ENCODE measurements at regions of chr7 and their contacts with region 1.

Region 1: DNA sequence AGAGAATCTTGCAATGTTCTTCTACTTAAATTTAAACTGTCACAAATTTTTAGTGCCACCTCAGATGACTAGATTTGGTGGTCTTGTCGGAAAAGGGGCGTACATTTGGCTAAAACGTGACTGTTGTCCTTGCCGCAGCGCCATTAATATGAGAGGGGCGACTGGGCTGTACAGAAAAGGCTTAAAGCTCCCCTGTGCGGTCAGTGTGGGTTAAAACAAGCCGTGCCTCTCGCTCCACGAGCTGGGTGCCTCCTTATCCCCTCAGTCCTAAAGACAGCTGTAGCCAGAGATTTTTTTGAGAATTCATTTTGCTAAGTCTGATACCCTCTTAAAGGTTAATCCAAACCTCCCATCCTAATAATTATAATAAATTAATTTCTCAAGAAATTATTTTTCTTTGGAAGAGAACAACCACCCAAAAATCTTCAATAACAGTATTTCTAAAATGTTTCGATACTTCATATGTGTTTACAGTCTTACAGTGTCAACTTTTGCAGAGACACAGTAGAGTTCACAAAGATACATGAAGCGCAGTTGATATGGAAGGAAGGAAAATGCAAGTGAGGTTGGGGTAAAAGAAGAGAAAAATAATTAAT is 68.6 kb downstream of the C7orf25 start:
- DNase-seq: peak; percentile 25 to 57 (median 40)
- ATAC-seq: peak; percentile 61 to 83
- H3K4me3 ChIP-seq: no peak overlapping the region
- H3K27ac ChIP-seq: no peak overlapping the region
- H3K4me1 ChIP-seq: no peaks in the 10 kb centered on the region
- H3K27me3 ChIP-seq: no peaks in the 10 kb centered on the region

Region 2: DNA sequence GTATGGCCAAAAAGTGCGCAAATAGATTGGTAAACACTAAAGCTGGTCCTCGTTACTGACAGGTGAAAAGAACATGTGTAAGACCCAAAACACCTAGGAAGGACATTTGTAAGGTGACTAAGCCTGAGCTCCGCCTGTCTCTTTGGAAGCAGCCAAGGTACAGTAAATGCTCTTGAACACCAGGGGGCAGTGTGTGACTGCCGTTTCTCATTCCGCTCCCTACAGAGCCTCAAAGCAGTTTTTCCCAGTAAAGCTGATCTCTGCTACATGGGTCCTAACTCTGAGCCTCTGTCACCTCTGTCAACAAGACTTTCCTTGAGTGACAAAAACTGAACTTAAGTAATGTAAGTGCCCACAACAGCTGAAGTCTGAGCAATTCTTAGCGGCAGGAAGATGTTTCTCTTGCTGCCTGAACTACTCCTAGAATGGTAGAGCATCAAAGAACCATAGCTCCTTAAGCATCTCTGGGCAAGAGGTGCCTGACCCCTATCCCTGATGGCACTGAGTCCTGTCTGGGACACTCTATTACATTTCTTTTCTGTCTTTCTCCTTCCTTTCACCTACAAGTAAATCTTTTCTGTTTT is 902.5 kb before region 1 on chr7:
- intact Hi-C with region 1: loop called in 1 of 4 experiments (anchors 10 kb)
- DNase-seq: peak; percentile 60 to 75 (median 75)
- ATAC-seq: peak; percentile 76 to 87
- H3K4me3 ChIP-seq: no peak overlapping the region
- H3K27ac ChIP-seq: no peak overlapping the region
- H3K4me1 ChIP-seq: no peaks in the 10 kb centered on the region
- H3K27me3 ChIP-seq: no peaks in the 10 kb centered on the region

Region 3: GRCh38 chr7:43044511-43044910 is 201.2 kb after region 1 on chr7:
- intact Hi-C with region 1: no loop called
- DNase-seq: no peak
- ATAC-seq: no peak
- H3K4me3 ChIP-seq: no peak overlapping the region
- H3K27ac ChIP-seq: no peak overlapping the region
- H3K4me1 ChIP-seq: no peaks in the 10 kb centered on the region
- H3K27me3 ChIP-seq: no peaks in the 10 kb centered on the region